GM10248 (cell line): ENCODE measurements at regions of chr19 and their contacts with region 1.

Region 1: GRCh38 chr19:35495107-35496064 is 5.1 kb upstream of the KRTDAP start:
- DNase-seq: peak; percentile 92
- CTCF ChIP-seq: peak; percentile 96

Region 2: GRCh38 chr19:35269421-35270117 is 225.8 kb before region 1 on chr19:
- CTCF ChIA-PET with region 1: interaction called, 12 read pairs
- POLR2A ChIA-PET with region 1: no interaction called
- DNase-seq: peak; percentile 89
- CTCF ChIP-seq: peak; percentile 73

Region 3: GRCh38 chr19:35403116-35403760 is 92.1 kb before region 1 on chr19:
- CTCF ChIA-PET with region 1: interaction called, 10 read pairs
- POLR2A ChIA-PET with region 1: no interaction called
- DNase-seq: no peak
- CTCF ChIP-seq: no peak

Region 4: DNA sequence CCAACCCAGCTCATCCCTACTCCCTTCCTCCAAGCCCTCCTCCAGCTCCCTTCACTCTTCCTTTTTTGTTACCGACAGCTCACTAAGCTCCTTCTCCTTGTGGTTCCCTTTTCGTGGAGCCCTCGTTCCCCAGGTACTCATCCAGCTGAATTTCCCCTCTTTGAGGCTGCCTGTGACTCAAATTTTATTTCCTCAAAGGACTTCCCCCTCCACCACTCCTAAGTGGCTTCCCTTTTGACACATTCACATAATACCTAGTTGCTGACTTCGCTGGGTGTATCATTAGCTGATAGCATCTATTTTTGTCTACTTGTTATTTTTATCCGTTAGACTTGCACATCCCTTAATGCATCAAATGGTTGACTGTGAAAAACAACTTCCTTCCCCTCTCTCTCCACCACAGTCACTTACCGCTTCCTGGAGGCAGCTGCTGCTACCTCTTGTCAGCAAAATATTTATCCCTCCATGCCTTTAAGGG is 32.9 kb before region 1 on chr19:
- CTCF ChIA-PET with region 1: interaction called, 13 read pairs
- POLR2A ChIA-PET with region 1: interaction called, 4 read pairs
- DNase-seq: peak; percentile 74
- CTCF ChIP-seq: peak; percentile 39

Region 5: DNA sequence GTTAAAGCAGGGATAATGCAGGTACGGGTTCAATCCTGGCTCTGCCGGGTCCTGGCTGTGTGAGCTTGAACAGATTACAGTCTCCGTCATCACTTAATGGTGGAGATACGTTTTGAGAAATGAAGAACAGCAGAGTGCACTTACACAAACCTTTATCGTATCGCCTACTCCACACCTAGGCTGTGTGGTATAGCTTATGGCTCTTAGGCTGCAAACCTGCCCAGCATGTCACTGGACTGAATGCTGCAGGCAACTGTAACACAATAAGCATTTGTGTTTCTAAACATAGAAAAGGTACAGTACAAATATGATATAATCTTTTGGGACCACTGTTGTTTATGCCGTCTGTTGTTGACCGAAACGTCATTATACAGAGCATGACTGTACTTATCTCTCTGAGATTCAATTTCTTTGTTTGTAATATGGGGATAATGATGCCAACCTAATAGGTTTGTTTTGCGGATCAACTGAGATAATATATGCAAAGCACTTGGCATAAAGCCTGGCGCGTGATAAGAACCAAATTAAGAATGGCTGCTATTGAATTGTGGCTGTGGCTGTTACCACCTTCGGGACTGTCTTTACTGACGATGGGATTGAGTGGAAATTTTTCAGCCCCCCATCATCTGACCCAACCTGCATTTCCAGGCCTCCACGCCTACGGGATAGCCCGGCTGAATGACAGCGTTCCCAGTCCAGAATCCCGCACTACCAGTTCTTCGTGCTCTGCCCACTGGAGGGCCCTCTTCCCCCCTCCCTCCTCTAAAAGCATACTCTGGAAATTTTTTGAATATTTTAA is 16.4 kb before region 1 on chr19:
- CTCF ChIA-PET with region 1: interaction called, 63 read pairs
- POLR2A ChIA-PET with region 1: no interaction called
- DNase-seq: no peak
- CTCF ChIP-seq: no peak

Region 6: DNA sequence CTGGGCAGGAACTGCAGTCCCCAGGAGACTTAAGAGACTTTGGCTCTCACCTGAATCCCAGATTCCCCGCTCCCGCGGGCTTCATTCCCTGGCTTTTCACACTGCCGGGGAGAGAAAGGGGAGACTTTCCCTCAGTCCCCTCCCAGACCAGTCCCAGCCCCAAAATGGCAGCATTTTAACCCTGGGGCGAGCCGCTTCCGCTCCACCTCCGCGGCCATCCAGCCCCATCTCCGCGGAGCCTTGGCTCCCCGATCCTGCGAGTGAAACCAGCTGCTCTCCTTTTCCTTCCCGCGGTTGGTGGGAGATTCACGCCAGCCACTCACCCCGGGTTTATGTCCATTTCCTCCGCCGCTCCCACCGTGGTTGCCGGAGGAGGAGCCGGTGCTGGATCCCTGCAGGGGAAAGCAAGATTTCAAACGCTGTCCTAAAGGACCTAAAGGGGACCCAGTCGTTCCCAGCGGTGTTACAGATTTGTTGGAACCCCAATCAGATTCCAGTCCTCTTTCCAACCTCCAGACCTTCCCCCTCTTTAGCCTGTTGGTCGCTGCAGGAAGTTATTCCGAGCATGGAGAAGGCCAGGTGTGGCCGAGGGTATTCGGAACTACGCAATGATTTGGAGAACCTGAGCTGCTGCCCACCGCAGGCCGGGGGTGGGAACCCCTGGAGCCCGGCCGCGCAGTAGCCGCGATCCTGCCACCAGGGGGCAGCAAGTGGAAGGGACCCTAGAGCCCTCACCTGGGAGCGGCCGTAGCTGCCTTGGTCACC is 14.7 kb after region 1 on chr19:
- CTCF ChIA-PET with region 1: interaction called, 126 read pairs
- POLR2A ChIA-PET with region 1: interaction called, 3 read pairs
- DNase-seq: peak; percentile 93
- CTCF ChIP-seq: peak; percentile 94